Activated CD8-positive, alpha-beta T cell treated with anti-CD3 and anti-CD28 coated beads for 36 hours (primary cell): ENCODE measurements at regions of chr13 and their contacts with region 1.

Region 1: GRCh38 chr13:30142486-30143211 is 164.7 kb downstream of the KATNAL1 start:
- DNase-seq: peak; percentile 31
- ATAC-seq: peak; percentile 20
- H3K4me3 Mint-ChIP-seq: no peak overlapping the region
- H3K27ac Mint-ChIP-seq: peak overlapping the region; percentile 56
- H3K4me1 Mint-ChIP-seq: peaks cover 46% of the 10 kb centered on the region
- H3K27me3 Mint-ChIP-seq: no peaks in the 10 kb centered on the region
- CTCF ChIP-seq: no peak

Region 2: DNA sequence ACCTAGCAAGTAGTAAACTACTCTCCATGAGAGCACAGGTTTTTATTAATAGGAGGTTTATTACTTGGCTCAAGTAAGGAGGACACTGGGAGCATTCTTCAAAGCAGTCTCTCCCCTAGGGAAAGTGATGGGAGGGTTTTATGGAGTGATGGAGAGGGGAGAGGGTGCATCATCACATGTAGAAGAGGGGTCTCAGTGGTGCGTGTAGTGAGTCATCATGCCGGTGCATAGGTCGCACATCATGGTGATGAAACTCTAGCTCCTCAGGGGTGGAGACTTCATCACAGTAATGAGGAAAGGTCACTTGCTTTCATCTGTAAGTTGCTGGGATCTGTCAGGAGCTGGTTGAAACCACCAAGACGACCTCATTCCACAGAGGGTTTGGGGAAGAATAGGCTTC is 81.4 kb before region 1 on chr13:
- CTCF ChIA-PET with region 1: no interaction called
- POLR2A ChIA-PET with region 1: no interaction called
- intact Hi-C with region 1: no loop called
- DNase-seq: no peak
- ATAC-seq: no peak
- H3K4me3 Mint-ChIP-seq: no peak overlapping the region
- H3K27ac Mint-ChIP-seq: no peak overlapping the region
- H3K4me1 Mint-ChIP-seq: no peaks in the 10 kb centered on the region
- H3K27me3 Mint-ChIP-seq: no peaks in the 10 kb centered on the region
- CTCF ChIP-seq: no peak

Region 3: DNA sequence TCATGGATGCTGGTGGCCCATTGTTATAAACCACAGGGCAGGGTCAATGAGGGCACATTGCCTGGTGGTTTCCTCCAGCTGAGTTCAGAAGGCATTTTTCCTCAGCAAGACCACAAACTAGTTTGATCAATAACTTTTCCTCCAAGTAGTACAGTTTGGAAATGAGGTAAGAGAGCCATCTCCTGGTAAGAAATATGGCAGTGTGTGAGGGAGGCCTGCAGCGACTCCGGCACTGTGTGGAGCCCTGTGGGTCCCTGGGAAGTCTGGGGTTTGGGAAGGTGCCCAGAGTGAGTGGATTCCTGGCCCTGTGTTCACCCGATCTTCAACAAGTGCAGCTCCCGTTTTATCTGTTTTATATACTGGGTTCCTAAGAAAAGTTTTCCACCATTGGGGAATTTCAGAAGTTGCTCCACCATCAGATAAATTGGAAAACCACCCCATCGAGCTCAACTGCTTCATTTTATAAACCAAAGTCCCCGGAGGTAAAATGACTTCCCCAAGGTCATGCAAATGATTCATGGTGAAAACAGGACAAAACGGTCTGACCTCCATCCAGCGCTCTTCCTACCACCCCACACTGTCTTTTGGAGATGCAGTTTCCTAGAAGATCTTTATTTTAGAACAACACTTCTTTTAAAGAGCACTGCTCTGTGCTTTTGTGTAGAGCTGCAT is 16.3 kb after region 1 on chr13:
- CTCF ChIA-PET with region 1: interaction called, 36 read pairs
- POLR2A ChIA-PET with region 1: interaction called, 4 read pairs
- intact Hi-C with region 1: no loop called
- DNase-seq: peak; percentile 16
- ATAC-seq: peak; percentile 37
- H3K4me3 Mint-ChIP-seq: no peak overlapping the region
- H3K27ac Mint-ChIP-seq: peak overlapping the region; percentile 60
- H3K4me1 Mint-ChIP-seq: peaks cover 34% of the 10 kb centered on the region
- H3K27me3 Mint-ChIP-seq: no peaks in the 10 kb centered on the region
- CTCF ChIP-seq: peak; percentile 29

Region 4: GRCh38 chr13:30792285-30793000 is 649.8 kb after region 1 on chr13:
- CTCF ChIA-PET with region 1: no interaction called
- POLR2A ChIA-PET with region 1: no interaction called
- intact Hi-C with region 1: loop called (anchors 10 kb)
- DNase-seq: no peak
- ATAC-seq: no peak
- H3K4me3 Mint-ChIP-seq: no peak overlapping the region
- H3K27ac Mint-ChIP-seq: no peak overlapping the region
- H3K4me1 Mint-ChIP-seq: peaks cover 34% of the 10 kb centered on the region
- H3K27me3 Mint-ChIP-seq: no peaks in the 10 kb centered on the region
- CTCF ChIP-seq: no peak